ENCODE measurements at regions of chr12 and their contacts with region 1.

Region 1: DNA sequence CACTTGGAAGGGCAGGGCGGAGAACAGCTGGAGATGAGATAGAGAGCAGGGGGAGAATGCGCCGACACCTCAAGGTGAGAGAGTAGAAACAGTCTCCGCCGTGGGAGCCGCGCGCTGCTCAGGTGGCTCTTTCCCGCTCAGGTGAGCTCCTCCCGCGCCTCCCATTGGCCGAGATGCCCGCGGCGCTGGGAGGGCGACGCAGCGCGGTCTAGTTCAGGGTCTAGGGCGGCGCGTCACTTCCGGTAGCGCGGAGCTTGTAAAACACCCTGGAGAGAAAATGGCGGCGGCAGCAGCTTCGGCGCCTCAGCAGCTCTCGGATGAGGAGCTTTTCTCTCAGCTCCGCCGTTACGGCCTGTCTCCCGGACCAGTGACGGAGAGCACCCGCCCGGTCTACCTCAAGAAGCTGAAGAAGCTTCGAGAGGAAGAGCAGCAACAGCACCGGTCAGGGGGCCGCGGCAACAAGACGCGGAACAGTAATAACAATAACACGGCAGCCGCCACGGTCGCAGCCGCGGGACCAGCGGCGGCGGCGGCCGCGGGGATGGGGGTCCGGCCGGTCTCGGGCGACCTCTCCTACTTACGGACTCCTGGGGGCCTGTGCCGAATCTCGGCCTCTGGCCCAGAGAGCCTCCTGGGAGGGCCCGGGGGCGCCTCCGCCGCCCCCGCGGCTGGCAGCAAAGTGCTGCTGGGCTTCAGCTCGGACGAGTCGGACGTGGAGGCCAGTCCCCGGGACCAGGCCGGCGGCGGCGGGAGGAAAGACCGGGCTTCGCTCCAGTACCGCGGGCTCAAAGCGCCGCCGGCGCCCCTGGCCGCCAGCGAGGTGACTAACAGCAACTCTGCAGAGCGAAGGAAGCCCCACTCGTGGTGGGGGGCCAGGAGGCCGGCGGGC is at the start of gene LEMD3:
- DNase-seq: peak; percentile 98
- ATAC-seq: peak; percentile 98
- total RNA-seq, gene LEMD3: 12.9 TPM

Region 2: GRCh38 chr12:65074932-65075331 is 94.6 kb before region 1 on chr12:
- intact Hi-C with region 1: no loop called
- DNase-seq: no peak
- ATAC-seq: no peak

Region 3: DNA sequence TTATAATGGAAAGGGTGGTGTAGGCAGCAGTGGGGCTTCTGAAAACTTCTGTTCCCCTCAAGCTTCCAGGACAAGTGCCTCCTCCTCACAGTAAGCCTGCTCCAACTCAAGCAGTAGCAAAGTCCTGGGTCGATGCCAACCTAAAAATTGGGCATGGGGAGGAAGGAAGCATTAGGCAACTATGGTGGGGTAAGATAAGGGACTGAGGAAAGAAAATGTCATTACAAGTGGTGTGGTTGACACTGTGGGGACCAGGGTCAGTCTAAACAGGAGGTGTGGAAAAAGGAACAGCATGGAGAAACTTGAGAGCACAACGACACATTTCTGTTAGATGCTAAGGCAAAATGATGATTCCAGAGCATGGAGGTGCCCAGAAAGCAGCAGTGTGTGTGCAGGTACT is 83.3 kb before region 1 on chr12:
- intact Hi-C with region 1: no loop called
- DNase-seq: no peak
- ATAC-seq: no peak

Region 4: GRCh38 chr12:65209655-65210043 is 40.1 kb after region 1 on chr12:
- intact Hi-C with region 1: loop called (anchors 5 kb)
- DNase-seq: no peak
- ATAC-seq: no peak

Region 5: DNA sequence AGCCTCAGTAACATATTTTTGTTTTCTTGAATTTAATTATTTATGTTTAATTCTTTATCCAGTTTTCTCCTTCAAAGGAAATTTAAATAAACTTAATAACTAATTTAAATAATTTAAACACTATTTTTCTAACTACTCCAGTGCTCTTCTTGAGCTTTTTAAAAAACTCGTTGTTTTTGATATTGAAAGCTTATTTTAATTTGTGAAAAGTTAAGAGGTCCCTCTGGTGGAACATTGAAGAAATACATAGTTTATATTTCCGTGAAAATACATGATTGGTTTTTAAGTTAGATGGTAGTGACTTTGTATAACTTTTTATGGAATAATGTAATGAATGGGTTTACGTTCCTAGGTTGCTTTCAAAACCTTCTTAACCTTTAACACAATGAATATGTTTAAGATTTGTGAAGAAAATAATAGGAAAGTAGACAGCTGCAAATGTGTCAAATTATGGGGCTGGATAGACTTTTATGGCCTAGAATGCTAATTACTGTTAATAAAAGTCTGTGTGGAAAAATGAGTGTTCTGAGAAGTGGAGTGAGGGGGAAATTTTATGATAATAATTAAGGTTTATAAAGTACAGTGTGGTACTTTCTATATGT is 63.0 kb after region 1 on chr12:
- intact Hi-C with region 1: loop called (anchors 5 kb)
- DNase-seq: no peak
- ATAC-seq: no peak

Region 6: DNA sequence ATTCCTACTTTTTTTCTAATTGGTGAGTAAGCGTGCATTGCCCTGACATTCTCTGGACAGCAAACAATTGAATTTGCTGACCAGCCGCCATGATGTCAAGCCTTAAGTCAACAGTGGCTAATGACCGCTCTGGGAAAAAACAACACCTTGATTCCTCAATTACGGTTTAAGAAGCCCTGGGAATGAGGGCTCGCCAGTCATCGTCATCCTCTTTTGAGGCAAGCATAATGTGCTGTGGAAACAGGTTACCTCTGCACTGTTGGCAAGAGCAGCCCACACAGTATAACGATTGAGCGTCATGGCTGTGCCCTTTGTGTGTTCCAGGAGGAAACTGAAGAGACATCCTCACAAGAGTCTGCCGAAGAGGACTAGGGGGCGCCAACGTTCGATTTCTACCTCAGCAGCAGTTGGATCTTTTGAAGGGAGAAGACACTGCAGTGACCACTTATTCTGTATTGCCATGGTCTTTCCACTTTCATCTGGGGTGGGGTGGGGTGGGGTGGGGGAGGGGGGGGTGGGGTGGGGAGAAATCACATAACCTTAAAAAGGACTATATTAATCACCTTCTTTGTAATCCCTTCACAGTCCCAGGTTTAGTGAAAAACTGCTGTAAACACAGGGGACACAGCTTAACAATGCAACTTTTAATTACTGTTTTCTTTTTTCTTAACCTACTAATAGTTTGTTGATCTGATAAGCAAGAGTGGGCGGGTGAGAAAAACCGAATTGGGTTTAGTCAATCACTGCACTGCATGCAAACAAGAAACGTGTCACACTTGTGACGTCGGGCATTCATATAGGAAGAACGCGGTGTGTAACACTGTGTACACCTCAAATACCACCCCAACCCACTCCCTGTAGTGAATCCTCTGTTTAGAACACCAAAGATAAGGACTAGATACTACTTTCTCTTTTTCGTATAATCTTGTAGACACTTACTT is 793.6 kb after region 1 on chr12:
- intact Hi-C with region 1: no loop called
- DNase-seq: peak; percentile 63
- ATAC-seq: no peak